Activated naive CD4-positive, alpha-beta T cell treated with anti-CD3 and anti-CD28 coated beads for 36 hours (primary cell): ENCODE measurements at regions of chr18 and their contacts with region 1.

Region 1: GRCh38 chr18:44758861-44759631 is 78.4 kb downstream of the SETBP1 start:
- DNase-seq: peak; percentile 76
- H3K4me3 Mint-ChIP-seq: no peak overlapping the region
- H3K27ac Mint-ChIP-seq: peak overlapping the region; percentile 80
- H3K4me1 Mint-ChIP-seq: peaks cover 27% of the 10 kb centered on the region
- H3K27me3 Mint-ChIP-seq: peaks cover 6% of the 10 kb centered on the region

Region 2: DNA sequence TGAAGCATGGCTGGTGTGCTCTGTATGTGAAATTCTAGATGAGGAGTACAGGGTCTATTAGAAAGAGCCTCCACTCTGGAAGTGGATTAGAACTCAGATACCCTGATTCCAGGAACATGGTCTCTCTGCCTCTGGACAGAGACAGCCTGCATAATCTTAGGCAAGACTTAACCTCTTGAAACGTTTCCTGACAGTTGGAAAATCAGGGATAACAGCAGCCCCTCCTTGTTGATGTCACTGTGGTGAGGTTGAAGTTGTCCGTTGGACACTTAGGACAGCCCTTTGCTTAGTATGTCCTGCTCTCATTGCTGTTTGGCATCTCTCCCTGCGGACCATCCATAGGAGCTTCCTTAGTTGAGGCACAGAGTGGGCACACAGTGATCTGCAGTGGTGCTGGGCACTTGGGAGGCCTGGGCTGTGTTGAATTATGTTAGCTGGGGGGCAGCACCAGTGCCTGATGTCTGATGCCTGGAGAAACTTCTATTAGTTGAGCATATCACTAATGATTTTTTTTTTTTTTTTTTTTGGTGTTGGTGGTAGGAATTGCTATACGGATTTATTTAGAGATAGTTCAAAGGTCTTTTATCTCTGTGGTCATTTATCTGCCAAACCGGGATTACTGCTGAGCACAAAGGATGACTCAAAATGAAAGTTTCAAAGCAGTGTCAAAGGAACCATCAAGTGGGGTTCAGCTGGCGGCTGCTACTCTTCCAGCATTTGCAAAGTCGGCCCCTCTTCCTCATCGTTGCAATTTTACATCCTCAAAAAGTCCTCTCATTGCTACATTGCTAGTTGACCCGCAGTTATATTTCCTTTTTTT is 49.5 kb before region 1 on chr18:
- CTCF ChIA-PET with region 1: no interaction called
- intact Hi-C with region 1: no loop called
- DNase-seq: no peak
- H3K4me3 Mint-ChIP-seq: no peak overlapping the region
- H3K27ac Mint-ChIP-seq: no peak overlapping the region
- H3K4me1 Mint-ChIP-seq: no peaks in the 10 kb centered on the region
- H3K27me3 Mint-ChIP-seq: peaks cover 31% of the 10 kb centered on the region

Region 3: GRCh38 chr18:44799907-44800421 is 40.9 kb after region 1 on chr18:
- CTCF ChIA-PET with region 1: interaction called, 3 read pairs
- intact Hi-C with region 1: loop called (anchors 1 kb)
- DNase-seq: no peak
- H3K4me3 Mint-ChIP-seq: no peak overlapping the region
- H3K27ac Mint-ChIP-seq: no peak overlapping the region
- H3K4me1 Mint-ChIP-seq: peaks cover 49% of the 10 kb centered on the region
- H3K27me3 Mint-ChIP-seq: peaks cover 9% of the 10 kb centered on the region

Region 4: DNA sequence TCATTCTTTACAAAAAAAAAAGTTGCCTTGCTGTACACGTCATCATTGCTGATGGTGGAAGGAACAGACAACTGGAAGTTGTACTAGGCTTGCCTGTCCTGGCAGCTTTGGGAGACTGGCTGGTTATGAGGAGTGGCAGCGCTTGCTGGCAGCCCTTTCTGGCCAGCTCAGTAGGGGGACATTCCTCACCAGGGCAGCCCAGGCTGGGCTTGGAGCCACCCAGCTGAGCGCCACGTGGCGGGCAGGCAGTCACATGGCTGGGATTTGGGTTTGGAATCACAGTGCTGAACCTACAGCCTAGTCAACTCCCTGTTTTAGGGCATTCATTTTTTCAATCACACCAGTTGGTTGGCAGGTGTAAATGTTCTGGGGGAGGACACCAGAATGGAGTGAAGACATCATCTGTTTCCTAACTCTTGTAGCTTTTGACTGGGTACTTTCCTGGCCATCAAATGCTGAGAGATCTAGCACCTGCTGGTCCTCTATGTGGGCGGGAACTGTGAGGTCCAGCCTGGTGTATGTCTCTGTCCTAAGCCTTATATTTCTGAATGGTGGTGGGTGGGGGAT is 61.0 kb after region 1 on chr18:
- CTCF ChIA-PET with region 1: no interaction called
- intact Hi-C with region 1: no loop called
- DNase-seq: no peak
- H3K4me3 Mint-ChIP-seq: no peak overlapping the region
- H3K27ac Mint-ChIP-seq: no peak overlapping the region
- H3K4me1 Mint-ChIP-seq: peaks cover 12% of the 10 kb centered on the region
- H3K27me3 Mint-ChIP-seq: peaks cover 16% of the 10 kb centered on the region

Region 5: GRCh38 chr18:44838971-44839666 is 80.1 kb after region 1 on chr18:
- CTCF ChIA-PET with region 1: interaction called, 3 read pairs
- intact Hi-C with region 1: loop called (anchors 1 kb)
- DNase-seq: peak; percentile 85
- H3K4me3 Mint-ChIP-seq: no peak overlapping the region
- H3K27ac Mint-ChIP-seq: no peak overlapping the region
- H3K4me1 Mint-ChIP-seq: peaks cover 12% of the 10 kb centered on the region
- H3K27me3 Mint-ChIP-seq: peaks cover 22% of the 10 kb centered on the region